ENCODE measurements at regions of chr12 and their contacts with region 1.

Region 1: GRCh38 chr12:92145731-92146496 is at the start of gene BTG1:
- DNase-seq: peak; percentile 100
- ATAC-seq: peak; percentile 85
- H3K4me3 ChIP-seq: peak within 1 kb of the TSS; percentile 88
- H3K27ac ChIP-seq: peak within 1 kb of the TSS; percentile 92
- H3K4me1 ChIP-seq: no peaks in the 10 kb centered on the region
- H3K27me3 ChIP-seq: no peaks in the 10 kb centered on the region
- CTCF ChIP-seq: 0 out of 2 replicates have a peak, but pooled peaks have one; percentile 7
- POLR2A ChIP-seq: peak; percentile 100
- RAD21 ChIP-seq: peak; percentile 32
- total RNA-seq, gene BTG1: 3.8 and 8.1 TPM in 2 replicates

Region 2: GRCh38 chr12:91382081-91382543 is 763.8 kb before region 1 on chr12:
- CTCF ChIA-PET with region 1: interaction called, 15 read pairs
- POLR2A ChIA-PET with region 1: interaction called, 6 read pairs
- dilution Hi-C with region 1: no loop called
- in situ Hi-C with region 1: loop called (anchors 10 kb)
- intact Hi-C with region 1: loop called (anchors 1 kb)
- DNase-seq: peak; percentile 80
- ATAC-seq: peak; percentile 67
- H3K4me3 ChIP-seq: peak overlapping the region; percentile 77
- H3K27ac ChIP-seq: 0 out of 2 replicates have a peak overlapping the region, but pooled peaks have one; percentile 71
- H3K4me1 ChIP-seq: peaks cover 6% of the 10 kb centered on the region
- H3K27me3 ChIP-seq: peaks cover 5% of the 10 kb centered on the region
- CTCF ChIP-seq: peak; percentile 90
- POLR2A ChIP-seq: 0 out of 2 replicates have a peak, but pooled peaks have one; percentile 23
- RAD21 ChIP-seq: peak; percentile 91

Region 3: DNA sequence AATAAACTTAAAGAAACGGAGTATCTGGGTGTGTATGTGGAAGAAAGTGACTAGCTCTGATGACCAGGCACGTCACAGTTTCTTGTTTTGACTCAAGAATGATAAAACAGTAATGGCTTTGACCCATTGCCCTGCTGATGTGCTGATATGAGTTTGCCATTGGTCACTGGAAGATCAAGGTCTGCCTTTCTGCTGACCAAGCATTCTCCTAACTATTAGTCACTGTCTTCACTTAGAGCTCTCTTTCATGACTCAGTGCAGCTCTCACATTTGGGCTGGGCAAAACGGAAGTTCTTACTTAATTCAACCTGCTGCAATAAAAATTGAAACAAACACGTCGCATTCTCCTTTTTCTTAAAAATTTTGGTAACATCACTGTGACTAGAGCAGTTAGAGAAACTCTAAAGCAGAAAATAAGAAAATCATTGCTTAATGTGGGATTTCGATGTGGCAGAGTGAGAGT is 366.9 kb before region 1 on chr12:
- CTCF ChIA-PET with region 1: no interaction called
- POLR2A ChIA-PET with region 1: no interaction called
- dilution Hi-C with region 1: no loop called
- in situ Hi-C with region 1: no loop called
- intact Hi-C with region 1: loop called (anchors 1 kb)
- DNase-seq: peak; percentile 88
- ATAC-seq: peak; percentile 81
- H3K4me3 ChIP-seq: no peak overlapping the region
- H3K27ac ChIP-seq: no peak overlapping the region
- H3K4me1 ChIP-seq: peaks cover 4% of the 10 kb centered on the region
- H3K27me3 ChIP-seq: peaks cover 2% of the 10 kb centered on the region; the same call in 1 of the 2 replicates
- CTCF ChIP-seq: no peak
- POLR2A ChIP-seq: no peak
- RAD21 ChIP-seq: no peak

Region 4: GRCh38 chr12:91978143-91978542 is 167.8 kb before region 1 on chr12:
- CTCF ChIA-PET with region 1: no interaction called
- POLR2A ChIA-PET with region 1: interaction called, 18 read pairs
- dilution Hi-C with region 1: no loop called
- in situ Hi-C with region 1: no loop called
- intact Hi-C with region 1: no loop called
- DNase-seq: peak; percentile 73
- ATAC-seq: peak; percentile 72
- H3K4me3 ChIP-seq: no peak overlapping the region
- H3K27ac ChIP-seq: peak overlapping the region; percentile 82
- H3K4me1 ChIP-seq: peaks cover 12% of the 10 kb centered on the region
- H3K27me3 ChIP-seq: no peaks in the 10 kb centered on the region
- CTCF ChIP-seq: no peak
- POLR2A ChIP-seq: no peak
- RAD21 ChIP-seq: no peak

Region 5: DNA sequence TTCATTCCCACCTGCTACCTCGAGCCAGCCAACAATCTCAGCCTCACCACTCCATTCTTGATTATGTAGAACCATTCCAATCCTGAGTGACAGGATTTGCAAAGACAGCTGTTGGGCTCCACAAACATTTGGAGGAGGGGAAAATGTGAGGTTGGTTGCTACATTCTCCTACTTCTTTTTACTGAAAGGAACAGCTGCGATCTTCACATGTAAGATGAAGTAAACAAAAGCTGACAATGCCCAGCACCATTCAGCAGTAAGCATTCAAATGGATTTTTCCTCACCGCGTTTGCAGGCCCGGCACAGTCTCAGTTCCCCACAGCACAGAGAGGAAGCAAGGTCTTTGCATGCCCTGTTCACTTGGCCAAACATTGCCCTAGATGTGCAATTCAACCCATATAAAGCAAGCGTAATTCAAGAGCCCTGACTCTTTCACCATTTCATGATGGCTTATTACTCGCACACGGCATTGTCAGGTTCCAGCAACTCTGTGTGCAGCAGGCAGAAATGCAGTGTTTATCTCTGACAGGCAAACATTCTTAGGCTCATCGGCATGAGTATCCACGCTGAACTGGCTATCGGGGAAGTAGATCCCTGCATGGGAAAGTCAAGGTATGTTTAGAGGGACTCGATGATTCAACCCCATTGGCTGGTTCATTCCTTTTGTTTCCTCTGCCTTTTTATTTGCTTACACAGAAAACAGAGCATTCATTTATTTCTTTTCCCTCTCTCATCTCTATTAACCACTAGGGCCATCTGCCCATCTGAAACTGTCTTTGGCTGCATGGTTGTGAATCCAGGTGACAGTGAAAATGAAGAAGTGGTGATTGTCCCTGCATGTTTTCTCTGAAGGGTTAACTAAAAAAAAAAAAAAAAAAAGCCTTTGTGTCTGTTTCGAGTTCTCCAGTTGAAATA is 320.7 kb after region 1 on chr12:
- CTCF ChIA-PET with region 1: no interaction called
- POLR2A ChIA-PET with region 1: no interaction called
- dilution Hi-C with region 1: no loop called
- in situ Hi-C with region 1: no loop called
- intact Hi-C with region 1: loop called (anchors 5 kb)
- DNase-seq: peak; percentile 62
- ATAC-seq: peak; percentile 83
- H3K4me3 ChIP-seq: no peak overlapping the region
- H3K27ac ChIP-seq: peak overlapping the region; percentile 23; the same call in 1 of the 2 replicates
- H3K4me1 ChIP-seq: peaks cover 4% of the 10 kb centered on the region
- H3K27me3 ChIP-seq: no peaks in the 10 kb centered on the region
- CTCF ChIP-seq: no peak
- POLR2A ChIP-seq: no peak
- RAD21 ChIP-seq: no peak

Region 6: GRCh38 chr12:92649511-92650227 is 503.8 kb after region 1 on chr12:
- CTCF ChIA-PET with region 1: interaction called, 5 read pairs
- POLR2A ChIA-PET with region 1: no interaction called
- dilution Hi-C with region 1: no loop called
- in situ Hi-C with region 1: no loop called
- intact Hi-C with region 1: loop called (anchors 1 kb)
- DNase-seq: peak; percentile 90
- ATAC-seq: peak; percentile 99
- H3K4me3 ChIP-seq: no peak overlapping the region
- H3K27ac ChIP-seq: no peak overlapping the region
- H3K4me1 ChIP-seq: no peaks in the 10 kb centered on the region
- H3K27me3 ChIP-seq: no peaks in the 10 kb centered on the region
- CTCF ChIP-seq: peak; percentile 85
- POLR2A ChIP-seq: no peak
- RAD21 ChIP-seq: peak; percentile 94

Measured in IMR-90 (cell line).